ENCODE measurements at regions of chr6 and their contacts with region 1.

Region 1: DNA sequence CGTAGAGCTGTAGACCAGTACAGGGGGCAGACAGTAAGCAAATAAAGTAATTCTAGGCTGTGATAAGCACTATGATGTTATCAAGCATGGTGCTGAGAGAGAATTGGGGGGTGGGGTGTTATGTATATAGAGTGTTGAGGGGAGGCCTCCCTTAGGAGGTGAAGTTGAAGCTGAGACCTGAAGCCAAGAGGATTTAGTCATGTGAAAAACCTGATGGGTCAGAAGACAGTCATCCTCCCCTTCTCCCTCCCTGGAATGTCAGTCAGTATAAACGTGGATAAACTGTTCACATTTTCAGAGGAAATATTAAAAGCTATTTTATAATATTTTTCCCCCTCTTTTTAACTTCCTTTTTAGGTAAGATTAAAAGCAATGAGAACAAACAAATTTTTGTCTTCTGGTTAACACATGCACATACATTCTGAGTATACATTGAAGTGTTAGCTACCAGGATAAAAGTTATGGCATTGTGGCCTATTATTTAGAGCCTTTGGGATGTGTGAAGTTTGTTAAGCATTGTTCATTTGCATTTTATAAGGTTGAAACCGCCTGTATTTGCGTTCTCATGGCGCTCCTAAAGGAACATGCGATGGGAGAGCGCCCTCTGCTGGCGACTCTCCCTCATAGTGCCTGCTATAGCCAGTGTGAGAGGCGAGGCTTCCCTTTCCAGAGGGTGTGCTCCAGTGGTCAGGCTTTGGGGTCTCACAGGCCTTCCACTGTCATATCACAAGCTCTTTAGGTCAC is 35.4 kb upstream of the MAPK13 start:
- DNase-seq: peak; percentile 68 to 86
- H3K4me3 ChIP-seq: no peak overlapping the region
- H3K4me1 ChIP-seq: no peaks in the 10 kb centered on the region
- H3K27me3 ChIP-seq: no peaks in the 10 kb centered on the region

Region 2: DNA sequence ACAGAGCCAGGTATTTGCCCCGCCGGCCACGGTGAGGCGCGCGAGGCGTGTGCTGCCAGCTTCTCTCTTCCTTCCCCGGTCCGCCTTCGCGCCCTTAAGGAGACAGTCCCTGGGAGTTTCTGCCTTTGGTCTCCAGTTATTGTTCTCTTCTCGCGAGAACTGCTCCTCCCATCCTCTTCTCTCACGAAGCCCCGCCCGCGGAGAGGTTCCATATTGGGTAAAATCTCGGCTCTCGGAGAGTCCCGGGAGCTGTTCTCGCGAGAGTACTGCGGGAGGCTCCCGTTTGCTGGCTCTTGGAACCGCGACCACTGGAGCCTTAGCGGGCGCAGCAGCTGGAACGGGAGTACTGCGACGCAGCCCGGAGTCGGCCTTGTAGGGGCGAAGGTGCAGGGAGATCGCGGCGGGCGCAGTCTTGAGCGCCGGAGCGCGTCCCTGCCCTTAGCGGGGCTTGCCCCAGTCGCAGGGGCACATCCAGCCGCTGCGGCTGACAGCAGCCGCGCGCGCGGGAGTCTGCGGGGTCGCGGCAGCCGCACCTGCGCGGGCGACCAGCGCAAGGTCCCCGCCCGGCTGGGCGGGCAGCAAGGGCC is 67.3 kb before region 1 on chr6 and contains the start of gene MAPK14:
- in situ Hi-C with region 1: loop called (anchors 5 kb)
- DNase-seq: peak; percentile 99 to 100
- H3K4me3 ChIP-seq: peak within 1 kb of the TSS; percentile 87
- H3K4me1 ChIP-seq: peaks cover 20% of the 10 kb centered on the region
- H3K27me3 ChIP-seq: no peaks in the 10 kb centered on the region

Measured in HAP-1 (cell line).